ENCODE measurements at regions of chr9 and their contacts with region 1.

Region 1: DNA sequence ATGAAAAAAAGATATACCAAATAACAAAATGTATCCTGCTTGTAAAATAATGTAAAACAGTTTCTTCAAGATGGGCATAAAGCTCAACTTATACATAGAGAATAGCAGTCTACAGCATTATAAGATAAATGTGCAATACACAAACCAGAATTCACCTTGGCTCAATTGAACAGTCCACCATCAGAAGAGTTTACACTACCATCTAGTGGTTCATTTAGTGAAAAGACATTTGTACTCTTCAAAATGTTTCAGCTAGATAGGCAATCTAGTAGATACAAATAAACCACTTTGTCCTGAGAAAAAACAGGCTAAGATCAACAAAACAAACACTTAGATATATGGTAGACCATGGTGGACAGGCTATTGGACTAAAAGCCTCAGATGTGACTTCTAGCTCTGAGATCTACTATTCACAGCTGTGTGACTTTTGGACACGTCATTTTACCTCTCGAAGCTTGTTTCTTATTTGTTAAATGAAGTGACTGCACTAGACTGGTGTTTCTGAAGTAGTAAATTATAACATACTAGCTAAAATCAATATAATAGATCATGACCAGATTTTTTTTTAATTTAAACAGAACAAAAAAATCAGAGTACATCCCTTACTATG is 22.1 kb upstream of the TPD52L3 start:
- H3K4me3 ChIP-seq: no peak overlapping the region
- H3K27ac ChIP-seq: no peak overlapping the region
- H3K4me1 ChIP-seq: no peaks in the 10 kb centered on the region
- CTCF ChIP-seq: 0 out of 2 replicates have a peak, but pooled peaks have one; percentile 24

Region 2: DNA sequence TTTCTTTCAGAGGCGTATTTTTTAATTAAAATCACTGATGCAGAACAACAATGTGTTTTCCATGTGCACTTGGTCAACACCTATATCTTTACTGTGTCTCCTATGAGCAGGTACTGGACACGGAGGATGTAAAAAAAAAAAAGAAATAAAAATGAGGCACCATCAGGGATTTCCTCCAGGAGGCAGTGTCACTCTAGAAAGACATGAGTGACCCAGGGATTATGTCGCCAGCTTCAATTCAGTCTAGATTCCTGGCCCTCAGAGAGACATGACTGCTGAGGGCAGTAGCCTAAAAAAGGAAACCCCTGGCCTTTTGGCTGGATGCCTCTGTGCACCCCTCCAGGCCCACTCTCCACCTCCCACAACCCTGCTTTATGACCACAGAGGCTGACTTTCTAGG is 108.7 kb before region 1 on chr9:
- CTCF ChIA-PET with region 1: interaction called, 38 read pairs
- POLR2A ChIA-PET with region 1: no interaction called
- H3K4me3 ChIP-seq: no peak overlapping the region
- H3K27ac ChIP-seq: no peak overlapping the region
- H3K4me1 ChIP-seq: no peaks in the 10 kb centered on the region
- CTCF ChIP-seq: peak; percentile 26; the same call in 1 of the 2 replicates

Region 3: GRCh38 chr9:6328103-6328502 is 22.0 kb after region 1 on chr9 and contains the start of gene TPD52L3:
- CTCF ChIA-PET with region 1: interaction called, 16 read pairs
- POLR2A ChIA-PET with region 1: no interaction called
- H3K4me3 ChIP-seq: no peak within 1 kb of the TSS
- H3K27ac ChIP-seq: no peak within 1 kb of the TSS
- H3K4me1 ChIP-seq: no peaks in the 10 kb centered on the region
- CTCF ChIP-seq: no peak

Region 4: DNA sequence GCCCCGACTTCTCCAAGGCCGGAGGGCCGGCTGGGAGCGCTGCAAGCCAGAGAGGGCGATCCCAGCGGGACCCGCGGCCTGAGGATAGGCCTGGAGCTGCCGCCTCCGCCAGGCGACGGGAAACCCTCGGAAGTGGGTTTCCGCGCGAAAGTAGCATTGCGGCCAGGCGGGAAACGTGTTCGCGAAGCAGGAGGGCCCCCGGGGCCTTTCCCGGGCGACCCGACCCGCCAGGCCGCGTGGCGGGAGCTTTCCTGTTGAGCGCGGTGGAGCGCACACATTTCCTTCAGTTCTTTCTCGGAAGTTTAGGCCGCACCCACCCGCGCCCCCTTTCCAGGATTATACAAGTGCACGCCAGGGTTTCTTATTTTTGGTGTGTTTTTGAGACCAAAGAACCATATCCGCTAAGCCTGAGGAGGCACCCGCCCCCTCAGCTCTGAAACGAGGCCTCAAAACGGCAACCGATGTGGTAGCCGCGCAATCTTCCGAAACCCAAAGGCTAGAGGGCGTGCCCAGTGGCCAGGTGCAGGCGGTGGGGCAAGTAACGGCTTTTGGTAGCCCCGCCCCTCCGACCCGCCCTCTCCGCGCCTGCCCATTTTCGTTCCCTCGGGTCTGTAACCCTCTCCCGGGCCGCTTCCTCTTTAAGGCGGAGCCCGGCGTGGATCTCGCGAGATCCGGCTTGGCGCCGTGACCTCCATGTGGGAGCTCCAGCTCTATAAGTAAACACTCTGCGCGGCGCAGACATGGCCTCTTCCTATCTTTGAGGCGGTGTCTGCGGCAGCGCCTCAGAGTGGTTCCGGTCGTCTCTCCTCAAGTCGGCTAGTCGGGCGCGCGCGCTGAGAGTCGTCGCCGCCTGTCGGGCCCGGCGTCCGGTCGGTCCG is 106.7 kb after region 1 on chr9 and contains the start of gene UHRF2:
- CTCF ChIA-PET with region 1: no interaction called
- POLR2A ChIA-PET with region 1: no interaction called
- H3K4me3 ChIP-seq: peak within 1 kb of the TSS; percentile 90
- H3K27ac ChIP-seq: peak within 1 kb of the TSS; percentile 92
- H3K4me1 ChIP-seq: no peaks in the 10 kb centered on the region
- CTCF ChIP-seq: no peak

Region 5: GRCh38 chr9:6479959-6480358 is 173.9 kb after region 1 on chr9:
- CTCF ChIA-PET with region 1: no interaction called
- POLR2A ChIA-PET with region 1: no interaction called
- H3K4me3 ChIP-seq: no peak overlapping the region
- H3K27ac ChIP-seq: no peak overlapping the region
- H3K4me1 ChIP-seq: no peaks in the 10 kb centered on the region
- CTCF ChIP-seq: no peak

Measured in HEK293 (cell line).